ENCODE measurements at regions of chr7 and their contacts with region 1.

Region 1: DNA sequence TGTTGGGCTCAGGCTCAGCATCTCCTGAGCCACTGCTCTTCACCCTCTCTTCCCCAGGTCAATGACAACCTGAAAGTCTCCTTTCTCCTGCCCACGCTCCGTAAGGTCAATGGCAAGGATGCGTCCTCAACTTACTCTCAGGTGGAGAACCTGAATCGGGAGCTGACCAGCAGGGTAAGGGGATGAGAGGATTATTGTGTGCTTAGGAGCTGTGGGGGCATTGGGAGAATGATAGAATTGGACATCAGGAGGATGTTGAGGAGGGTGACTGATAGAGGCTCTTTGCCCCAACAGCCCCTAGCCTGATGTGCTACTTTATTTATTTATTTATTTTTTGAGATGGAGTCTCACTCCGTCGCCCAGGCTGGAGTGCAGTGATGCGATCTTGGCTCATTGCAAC is 1.3 kb downstream of the LRWD1 start:
- DNase-seq: no peak
- H3K4me3 ChIP-seq: no peak overlapping the region
- H3K27ac ChIP-seq: no peak overlapping the region
- H3K27me3 ChIP-seq: no peaks in the 10 kb centered on the region
- CTCF ChIP-seq: no peak

Region 2: DNA sequence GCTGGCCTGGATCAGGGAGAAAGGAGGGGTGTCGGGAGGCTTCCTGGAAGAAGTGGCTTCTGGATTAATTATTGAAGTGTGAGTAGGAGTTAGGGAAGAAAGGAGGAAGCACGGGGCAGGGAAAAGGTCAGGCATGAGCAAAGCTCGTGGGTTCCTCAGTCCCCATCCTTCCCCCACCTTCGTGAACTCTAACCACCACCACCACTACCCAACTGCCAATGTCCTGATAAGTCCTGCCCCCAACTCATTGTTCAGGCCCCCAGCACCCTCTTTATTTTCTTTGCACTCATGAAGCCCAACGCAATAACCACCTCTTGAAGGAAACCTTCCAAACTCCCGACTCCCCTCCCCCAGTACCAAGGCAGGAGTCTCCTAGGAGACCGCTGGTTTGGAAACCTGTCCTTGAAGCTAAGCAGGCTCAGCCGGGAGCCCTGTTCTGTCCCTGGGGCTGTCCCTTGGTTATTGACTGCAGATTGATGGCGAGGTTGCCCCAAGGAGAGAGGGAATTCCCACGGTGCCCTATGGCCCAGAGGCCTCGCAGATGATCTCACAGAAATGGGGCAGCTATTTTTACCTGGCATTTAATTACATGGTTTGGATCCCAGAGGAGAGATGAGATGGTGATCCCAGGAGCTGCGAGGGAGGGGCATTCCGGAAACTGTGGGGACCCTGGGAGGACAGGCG is 170.3 kb before region 1 on chr7:
- CTCF ChIA-PET with region 1: interaction called, 10 read pairs
- POLR2A ChIA-PET with region 1: no interaction called
- DNase-seq: no peak
- H3K4me3 ChIP-seq: no peak overlapping the region
- H3K27ac ChIP-seq: no peak overlapping the region
- H3K27me3 ChIP-seq: peaks cover 14% of the 10 kb centered on the region
- CTCF ChIP-seq: no peak

Region 3: DNA sequence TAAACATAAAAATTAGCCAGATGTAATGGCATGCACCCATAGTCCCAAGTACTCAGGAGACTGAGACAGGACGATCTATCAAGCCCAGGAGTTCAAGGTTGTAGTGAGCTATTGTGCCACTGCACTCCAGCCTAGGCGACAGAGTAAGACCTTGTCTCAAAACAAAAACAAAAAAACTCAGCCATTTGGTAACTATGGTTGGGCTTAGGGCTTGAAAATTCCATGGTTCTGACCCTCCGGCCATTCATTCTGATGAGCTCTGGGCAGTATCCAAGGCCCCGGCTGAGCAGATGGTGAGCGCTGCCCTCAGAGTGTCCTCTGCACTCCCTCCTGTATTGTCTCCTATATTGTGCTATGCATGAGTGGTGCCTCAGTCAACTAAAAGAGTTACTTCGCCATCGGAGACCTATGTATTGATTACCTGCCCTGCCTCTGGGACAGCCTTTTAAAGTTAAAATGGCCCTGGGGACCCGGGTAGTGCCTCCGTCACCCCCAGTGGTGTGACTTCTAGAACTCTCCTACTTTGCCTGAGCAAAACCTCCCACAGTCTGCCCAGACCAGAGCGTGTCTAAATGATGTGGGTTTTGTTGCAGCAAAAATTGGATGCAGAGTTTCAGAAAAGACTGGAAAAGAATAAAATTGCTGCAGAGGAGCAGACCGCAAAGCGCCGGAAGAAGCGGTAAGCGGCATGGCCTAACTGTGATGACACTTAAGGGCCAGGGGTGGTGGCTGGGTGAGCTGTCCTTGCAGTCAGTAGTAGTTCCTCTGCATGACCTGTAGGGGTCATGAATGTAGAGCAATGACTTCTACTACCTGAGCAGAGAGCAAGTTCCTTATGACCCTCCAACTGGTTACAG is 61.9 kb before region 1 on chr7:
- CTCF ChIA-PET with region 1: interaction called, 13 read pairs
- POLR2A ChIA-PET with region 1: no interaction called
- DNase-seq: no peak
- H3K4me3 ChIP-seq: no peak overlapping the region
- H3K27ac ChIP-seq: no peak overlapping the region
- H3K27me3 ChIP-seq: no peaks in the 10 kb centered on the region
- CTCF ChIP-seq: peak; percentile 61

Measured in AG04450 (cell line).